ENCODE measurements at regions of chr3 and their contacts with region 1.

Region 1: DNA sequence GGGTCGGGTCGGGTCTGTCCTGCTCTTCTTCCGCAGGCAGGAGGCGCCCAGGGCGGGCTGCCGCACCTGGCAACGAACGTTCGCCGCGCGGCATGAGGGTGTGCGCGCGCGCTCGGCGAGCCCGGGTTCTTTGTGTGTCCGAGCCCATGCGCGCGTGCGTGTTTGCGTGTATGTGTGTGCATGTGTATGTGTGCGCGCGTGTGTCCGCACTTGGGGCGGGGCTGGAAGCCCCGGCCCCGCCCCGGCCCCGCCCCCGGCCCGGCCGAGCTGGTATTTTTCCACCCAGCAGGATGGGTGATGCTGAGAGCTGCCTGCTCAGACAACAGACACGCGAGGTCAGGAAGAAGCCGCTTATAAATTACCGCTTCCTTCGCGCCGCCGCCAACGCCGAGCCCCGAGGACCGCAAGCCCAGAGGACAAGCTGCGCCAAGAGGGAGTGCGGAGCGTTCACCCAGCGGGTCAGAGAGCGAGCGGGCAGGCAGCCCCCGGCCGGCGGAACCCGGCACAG is at the start of gene SLC6A6:
- DNase-seq: peak; percentile 95 to 98 (median 96)
- H3K4me3 ChIP-seq: peak within 1 kb of the TSS; percentile 43
- H3K27ac ChIP-seq: peak within 1 kb of the TSS; percentile 73 to 87
- H3K4me1 ChIP-seq: peaks cover 7% of the 10 kb centered on the region
- H3K27me3 ChIP-seq: no peaks in the 10 kb centered on the region
- CTCF ChIP-seq: peak; percentile 30 to 71 (median 58)
- EP300 ChIP-seq: no peak
- POLR2A ChIP-seq: no peak
- total RNA-seq, gene SLC6A6: 32.5 to 141 (median 80.5) TPM

Region 2: GRCh38 chr3:14203521-14204079 is 198.8 kb before region 1 on chr3:
- intact Hi-C with region 1: loop called in 2 of 4 experiments (anchors 5 to 10 kb)
- DNase-seq: peak; percentile 72 to 84 (median 74)
- H3K4me3 ChIP-seq: no peak overlapping the region
- H3K27ac ChIP-seq: peak overlapping the region in 1 of 2 donors; percentile 3
- H3K4me1 ChIP-seq: peaks cover 19% of the 10 kb centered on the region
- H3K27me3 ChIP-seq: no peaks in the 10 kb centered on the region
- CTCF ChIP-seq: peak; percentile 86 to 93 (median 90)
- EP300 ChIP-seq: no peak
- POLR2A ChIP-seq: no peak

Region 3: GRCh38 chr3:14261229-14261628 is 141.1 kb before region 1 on chr3:
- intact Hi-C with region 1: loop called in 2 of 4 experiments (anchors 5 kb)
- DNase-seq: peak; percentile 82 to 90 (median 89)
- H3K4me3 ChIP-seq: no peak overlapping the region
- H3K27ac ChIP-seq: no peak overlapping the region
- H3K4me1 ChIP-seq: peaks cover 21% of the 10 kb centered on the region
- H3K27me3 ChIP-seq: no peaks in the 10 kb centered on the region
- CTCF ChIP-seq: peak; percentile 84 to 89 (median 85)
- EP300 ChIP-seq: no peak
- POLR2A ChIP-seq: no peak

Region 4: DNA sequence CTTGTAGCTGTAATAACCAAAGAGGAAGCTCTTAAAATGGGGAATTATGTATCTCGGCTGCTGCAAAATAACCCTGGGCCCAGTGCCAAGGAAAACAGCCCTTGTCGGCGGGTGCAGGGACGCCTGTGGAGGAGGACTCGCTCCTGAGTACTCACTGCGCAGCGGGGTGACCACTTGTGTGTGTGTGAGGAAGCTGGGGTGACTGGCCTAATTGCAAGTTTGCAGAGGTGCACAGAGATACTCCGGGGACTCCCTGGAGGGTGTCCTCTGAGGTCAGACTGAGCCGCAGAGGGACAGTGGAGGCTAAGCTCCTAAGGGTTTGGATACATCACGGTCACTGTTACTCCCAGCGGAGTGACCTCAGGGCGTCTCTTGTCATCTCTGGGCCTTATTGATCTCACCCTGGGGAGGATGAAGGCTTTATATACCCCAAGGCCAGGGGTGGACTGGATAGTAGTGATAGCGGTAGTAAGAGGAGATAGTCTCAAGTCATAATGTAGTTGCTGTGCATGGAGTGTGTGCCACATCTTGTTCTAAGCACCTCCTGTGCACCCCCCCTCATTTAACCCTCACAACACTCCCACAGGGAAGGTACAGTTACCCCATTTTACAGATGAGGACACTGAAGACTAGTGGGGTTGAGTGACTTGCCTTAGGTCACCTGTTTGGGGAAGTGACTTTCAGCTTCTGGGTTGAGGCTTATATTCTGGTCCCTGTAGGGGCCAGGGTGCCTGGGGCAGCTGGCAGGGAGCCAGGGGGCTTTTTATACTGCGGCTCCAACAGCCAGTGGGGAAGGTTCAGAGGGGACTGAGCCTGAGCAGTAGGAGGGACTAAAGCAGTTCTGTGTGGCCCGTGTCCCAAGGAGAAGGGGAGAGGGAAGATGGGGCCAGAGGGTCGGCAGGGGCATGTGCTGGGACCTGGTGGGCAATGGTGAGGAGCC is 37.5 kb after region 1 on chr3:
- intact Hi-C with region 1: loop called in 1 of 4 experiments (anchors 5 kb)
- DNase-seq: peak; percentile 72 to 84 (median 78)
- H3K4me3 ChIP-seq: no peak overlapping the region
- H3K27ac ChIP-seq: peak overlapping the region in 1 of 2 donors; percentile 29
- H3K4me1 ChIP-seq: peaks cover 31% of the 10 kb centered on the region
- H3K27me3 ChIP-seq: no peaks in the 10 kb centered on the region
- CTCF ChIP-seq: no peak
- EP300 ChIP-seq: no peak
- POLR2A ChIP-seq: no peak

Region 5: DNA sequence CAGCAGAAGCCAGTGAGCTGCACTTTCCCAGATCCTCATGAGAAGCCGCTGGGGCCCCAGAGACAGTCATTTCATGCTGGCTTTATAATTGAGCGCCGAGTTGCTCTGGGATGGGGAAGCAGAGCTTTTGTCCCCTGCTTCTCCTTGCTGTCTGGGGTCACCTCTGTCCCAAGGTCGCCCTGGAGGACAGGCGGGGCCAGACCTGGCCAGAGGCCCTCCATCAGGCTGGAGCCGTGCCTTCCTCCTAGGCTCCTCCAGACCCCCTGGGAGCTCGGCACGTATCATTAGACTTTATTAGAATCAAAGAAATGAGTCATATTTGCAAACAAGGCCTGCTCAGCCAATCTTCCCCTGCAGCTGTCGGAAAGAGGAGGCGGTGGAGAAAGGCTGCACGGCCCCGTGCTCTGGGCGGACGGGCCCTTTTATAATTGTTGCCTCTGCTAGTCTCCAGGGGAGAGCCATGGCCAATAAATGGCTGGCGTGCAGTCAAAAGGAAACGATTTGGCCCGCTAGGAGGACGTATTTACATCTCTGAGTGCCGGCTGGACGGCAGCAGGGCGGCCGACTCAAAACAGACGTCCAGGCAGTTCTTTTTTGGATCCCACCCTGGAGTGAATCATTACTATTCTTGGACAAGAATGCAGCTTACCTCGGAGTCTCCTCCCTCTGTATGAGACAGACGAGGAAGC is 50.5 kb after region 1 on chr3:
- intact Hi-C with region 1: loop called in 2 of 4 experiments (anchors 5 to 10 kb)
- DNase-seq: peak; percentile 95 to 97 (median 96)
- H3K4me3 ChIP-seq: no peak overlapping the region
- H3K27ac ChIP-seq: peak overlapping the region; percentile 88 to 92
- H3K4me1 ChIP-seq: peaks cover 35% of the 10 kb centered on the region
- H3K27me3 ChIP-seq: no peaks in the 10 kb centered on the region
- CTCF ChIP-seq: peak in 2 of 3 donors; percentile 26 to 42
- EP300 ChIP-seq: peak; percentile 19
- POLR2A ChIP-seq: no peak

Region 6: GRCh38 chr3:14461748-14462324 is 59.5 kb after region 1 on chr3:
- intact Hi-C with region 1: loop called in 3 of 4 experiments (anchors 5 to 10 kb)
- DNase-seq: no peak
- H3K4me3 ChIP-seq: no peak overlapping the region
- H3K27ac ChIP-seq: peak overlapping the region; percentile 43 to 68
- H3K4me1 ChIP-seq: peaks cover 16% of the 10 kb centered on the region
- H3K27me3 ChIP-seq: no peaks in the 10 kb centered on the region
- CTCF ChIP-seq: peak in 1 of 3 donors; percentile 13
- EP300 ChIP-seq: no peak
- POLR2A ChIP-seq: no peak

Region 7: DNA sequence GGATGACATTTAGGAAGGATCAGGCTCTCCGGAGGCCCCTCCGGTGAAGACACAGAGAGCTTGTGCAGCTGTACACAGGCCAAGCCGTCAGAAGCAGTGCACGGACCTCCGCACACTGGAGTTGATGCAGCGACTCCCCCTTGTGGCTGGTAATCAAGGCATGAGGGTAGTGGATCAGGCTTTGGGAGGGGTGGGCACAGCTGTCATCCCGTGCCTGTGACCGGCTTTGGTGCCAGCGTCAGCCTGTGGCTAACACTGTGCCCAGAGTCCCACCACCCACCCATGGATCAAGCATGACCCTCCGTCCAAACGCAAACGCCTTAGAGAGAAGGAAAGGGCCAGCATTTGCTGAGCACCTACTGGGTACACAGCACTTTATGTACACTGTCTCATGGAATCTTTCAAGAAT is 146.0 kb after region 1 on chr3:
- intact Hi-C with region 1: loop called in 1 of 4 experiments (anchors 5 kb)
- DNase-seq: peak; percentile 79 to 88 (median 82)
- H3K4me3 ChIP-seq: no peak overlapping the region
- H3K27ac ChIP-seq: peak overlapping the region in 1 of 2 donors; percentile 39
- H3K4me1 ChIP-seq: peaks cover 6% of the 10 kb centered on the region
- H3K27me3 ChIP-seq: no peaks in the 10 kb centered on the region
- CTCF ChIP-seq: peak; percentile 73 to 89 (median 76)
- EP300 ChIP-seq: no peak
- POLR2A ChIP-seq: no peak